Psoas muscle (tissue), 8 donors: ENCODE measurements at regions of chr9 and their contacts with region 1.

Region 1: DNA sequence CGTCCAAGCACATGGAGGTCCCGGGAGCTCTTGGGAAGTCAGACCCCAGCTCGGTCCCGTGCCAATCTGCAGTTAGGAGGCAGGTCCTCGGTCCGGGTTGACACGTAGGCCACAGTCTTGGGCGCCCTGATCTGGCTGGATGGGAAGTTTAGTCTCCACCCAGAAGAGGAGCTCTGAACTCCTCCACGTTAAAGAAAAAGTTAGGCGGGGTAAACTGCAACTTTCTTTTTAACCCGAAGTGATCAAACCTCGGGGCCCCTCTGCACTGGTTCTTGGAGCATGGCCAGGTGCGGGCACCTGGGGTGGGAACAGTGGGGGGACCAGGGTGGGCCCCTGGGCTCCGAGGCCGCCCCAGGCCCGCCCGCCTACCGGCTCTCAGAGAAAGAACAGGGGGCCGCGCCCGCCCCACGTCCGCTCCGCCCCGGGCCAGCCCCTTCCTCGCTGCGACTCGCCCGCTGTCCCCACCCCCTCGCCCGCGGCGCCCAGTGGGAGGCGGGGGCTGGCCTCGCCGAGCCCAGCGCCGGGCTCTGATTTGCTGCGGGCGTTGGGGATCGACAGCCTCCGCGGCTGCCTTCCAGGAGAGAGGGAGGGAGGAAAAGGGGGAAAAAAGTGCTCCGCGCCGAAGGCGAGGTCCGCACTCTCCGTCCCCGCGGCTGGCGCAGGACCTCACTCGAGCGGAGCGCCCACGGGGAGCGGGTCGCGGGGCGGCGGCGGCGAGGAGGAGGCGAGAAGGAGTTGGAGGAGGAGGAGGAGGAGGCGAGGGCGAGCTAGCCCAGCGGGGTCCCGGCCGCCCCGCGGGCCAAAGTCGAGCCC is at the start of gene COL5A1:
- DNase-seq: peak; percentile 91 to 92
- ATAC-seq: peak; percentile 68 to 85 (median 80)
- H3K4me3 ChIP-seq: peak within 1 kb of the TSS; percentile 64
- H3K27ac ChIP-seq: peak within 1 kb of the TSS; percentile 25
- H3K4me1 ChIP-seq: no peaks in the 10 kb centered on the region
- H3K27me3 ChIP-seq: peaks cover 0 to 67% (median 15%) of the 10 kb centered on the region in 3 donors
- CTCF ChIP-seq: peak; percentile 15
- total RNA-seq, gene COL5A1: 3.4 to 11.3 (median 4.7) TPM

Region 2: DNA sequence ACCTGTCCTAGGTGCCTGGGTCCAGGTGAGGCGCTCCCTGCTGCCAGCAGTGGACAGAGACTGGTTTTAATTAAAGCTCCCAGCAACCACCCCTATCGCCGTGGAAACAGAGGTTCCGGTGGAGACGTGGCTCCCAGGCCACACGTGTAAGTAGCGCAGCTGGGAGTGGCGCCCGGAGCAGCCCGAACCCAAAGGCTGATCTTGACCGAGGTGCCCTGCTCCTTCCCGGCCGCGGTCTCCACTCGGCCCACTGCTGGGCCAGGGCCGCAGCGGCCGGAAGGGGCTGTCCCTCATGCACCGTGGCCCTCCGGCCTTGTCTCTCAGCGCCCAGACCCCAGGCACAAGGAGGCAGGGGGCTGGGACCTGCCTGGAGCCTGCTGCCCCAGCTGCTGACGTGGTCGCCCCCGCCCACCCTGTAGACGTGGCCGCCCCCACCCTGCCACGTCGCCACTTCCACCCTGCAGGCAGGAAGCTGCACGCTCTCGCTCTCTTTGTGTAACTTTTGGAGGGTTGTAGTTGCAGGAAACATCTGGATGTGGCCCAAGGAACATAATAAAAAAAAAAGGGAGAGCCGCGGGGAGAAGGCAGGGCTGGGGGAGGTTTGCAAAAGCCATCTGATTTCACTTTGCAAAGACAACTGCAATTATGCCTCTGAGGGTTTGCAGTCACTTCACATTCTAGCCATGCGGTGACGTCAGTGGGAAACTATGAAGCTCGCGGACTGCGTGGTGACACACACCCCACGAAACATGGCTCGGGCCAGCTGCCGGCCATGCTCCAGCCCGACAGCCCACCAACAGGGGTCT is 185.2 kb before region 1 on chr9:
- intact Hi-C with region 1: loop called in 1 of 2 experiments (anchors 10 kb)
- DNase-seq: peak; percentile 85 to 89
- ATAC-seq: peak; percentile 72 to 84 (median 72)
- H3K4me3 ChIP-seq: peak overlapping the region; percentile 53
- H3K27ac ChIP-seq: peak overlapping the region; percentile 80
- H3K4me1 ChIP-seq: peaks cover 16% of the 10 kb centered on the region
- H3K27me3 ChIP-seq: no peaks in the 10 kb centered on the region
- CTCF ChIP-seq: no peak

Region 3: DNA sequence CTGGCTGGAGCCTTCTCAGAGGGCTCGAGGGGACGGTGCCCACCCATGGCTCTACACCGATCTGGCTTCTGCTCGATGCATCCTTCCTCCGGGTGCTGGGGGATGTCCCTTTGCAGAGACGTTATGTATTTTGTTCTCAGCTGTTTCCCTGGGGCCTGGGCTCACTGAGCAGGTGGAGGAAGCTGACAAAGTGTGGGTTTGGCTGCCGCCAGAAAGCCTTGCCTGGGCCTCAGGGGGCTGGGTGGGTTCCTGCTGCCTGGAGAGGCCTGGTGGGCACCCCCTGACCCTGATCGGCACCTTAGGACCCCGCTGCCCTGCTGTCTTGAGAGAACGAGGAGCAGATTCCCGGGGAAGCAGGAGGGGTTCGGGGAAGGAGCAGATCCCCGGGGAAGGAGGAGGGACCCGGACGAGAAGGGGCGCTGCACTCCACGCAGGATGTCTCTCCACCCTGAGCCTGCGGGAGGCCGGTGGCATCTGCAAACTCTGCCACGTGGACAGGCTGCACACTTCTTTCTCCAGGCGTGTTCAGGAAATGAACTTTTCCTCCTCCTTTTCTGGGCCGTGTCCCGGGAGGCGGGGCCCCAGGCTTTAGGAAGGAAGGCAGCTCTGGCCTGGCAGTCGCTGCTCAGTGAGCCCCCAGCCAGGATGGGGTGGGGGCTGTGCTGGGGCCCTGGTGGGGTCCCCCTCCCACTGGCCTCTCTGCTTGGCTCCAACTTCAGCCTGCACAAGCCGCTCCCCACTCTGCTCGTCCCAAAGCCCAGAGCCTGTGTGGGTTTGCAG is 166.2 kb before region 1 on chr9:
- intact Hi-C with region 1: loop called in 1 of 2 experiments (anchors 10 kb)
- DNase-seq: peak; percentile 78 to 81
- ATAC-seq: peak in 3 of 4 donors; percentile 23 to 55 (median 46)
- H3K4me3 ChIP-seq: no peak overlapping the region
- H3K27ac ChIP-seq: peak overlapping the region; percentile 41
- H3K4me1 ChIP-seq: no peaks in the 10 kb centered on the region
- H3K27me3 ChIP-seq: no peaks in the 10 kb centered on the region
- CTCF ChIP-seq: no peak